MCF 10A (cell line): ENCODE measurements at regions of chr13 and their contacts with region 1.

Region 1: DNA sequence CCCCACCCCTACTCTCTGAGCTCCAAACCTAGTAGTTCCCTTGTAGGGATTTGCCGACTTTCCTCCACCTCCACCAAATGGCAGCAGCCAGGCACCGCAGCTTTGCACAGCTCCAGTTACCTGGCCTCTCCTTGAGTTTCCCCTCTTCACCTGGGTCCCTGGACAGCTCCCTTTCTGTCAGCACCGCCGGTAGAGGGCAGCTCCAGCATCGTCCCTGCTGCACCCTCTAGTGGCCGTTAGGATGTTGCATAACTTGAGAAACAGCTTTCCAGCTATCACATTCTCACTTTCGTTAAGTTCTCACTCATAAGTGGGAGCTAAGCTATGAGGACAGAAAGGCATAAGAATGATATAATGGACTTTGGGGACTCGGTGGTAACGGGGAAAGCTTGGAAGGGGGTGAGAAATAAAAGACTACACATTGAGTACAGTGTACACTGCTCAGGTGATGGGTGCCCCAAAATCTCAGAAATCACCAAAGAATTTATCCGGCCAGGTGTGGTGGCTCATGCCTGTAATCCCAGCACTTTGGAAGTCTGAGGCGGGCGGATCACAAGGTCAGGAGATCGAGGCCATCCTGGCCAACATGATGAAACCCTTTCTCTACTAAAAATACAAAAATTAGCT is 60.4 kb upstream of the OLFM4 start:
- DNase-seq: peak; percentile 83
- H3K4me3 Mint-ChIP-seq: no peak overlapping the region
- H3K27ac Mint-ChIP-seq: no peak overlapping the region
- H3K4me1 Mint-ChIP-seq: peaks cover 6% of the 10 kb centered on the region
- H3K27me3 Mint-ChIP-seq: peaks cover under 1% of the 10 kb centered on the region
- CTCF ChIP-seq: peak; percentile 95

Region 2: GRCh38 chr13:52665325-52665724 is 302.9 kb before region 1 on chr13:
- CTCF ChIA-PET with region 1: interaction called, 46 read pairs
- POLR2A ChIA-PET with region 1: no interaction called
- intact Hi-C with region 1: loop called (anchors 1 kb)
- DNase-seq: peak; percentile 30
- H3K4me3 Mint-ChIP-seq: no peak overlapping the region
- H3K27ac Mint-ChIP-seq: no peak overlapping the region
- H3K4me1 Mint-ChIP-seq: peaks cover 6% of the 10 kb centered on the region
- H3K27me3 Mint-ChIP-seq: no peaks in the 10 kb centered on the region
- CTCF ChIP-seq: peak; percentile 42

Region 3: DNA sequence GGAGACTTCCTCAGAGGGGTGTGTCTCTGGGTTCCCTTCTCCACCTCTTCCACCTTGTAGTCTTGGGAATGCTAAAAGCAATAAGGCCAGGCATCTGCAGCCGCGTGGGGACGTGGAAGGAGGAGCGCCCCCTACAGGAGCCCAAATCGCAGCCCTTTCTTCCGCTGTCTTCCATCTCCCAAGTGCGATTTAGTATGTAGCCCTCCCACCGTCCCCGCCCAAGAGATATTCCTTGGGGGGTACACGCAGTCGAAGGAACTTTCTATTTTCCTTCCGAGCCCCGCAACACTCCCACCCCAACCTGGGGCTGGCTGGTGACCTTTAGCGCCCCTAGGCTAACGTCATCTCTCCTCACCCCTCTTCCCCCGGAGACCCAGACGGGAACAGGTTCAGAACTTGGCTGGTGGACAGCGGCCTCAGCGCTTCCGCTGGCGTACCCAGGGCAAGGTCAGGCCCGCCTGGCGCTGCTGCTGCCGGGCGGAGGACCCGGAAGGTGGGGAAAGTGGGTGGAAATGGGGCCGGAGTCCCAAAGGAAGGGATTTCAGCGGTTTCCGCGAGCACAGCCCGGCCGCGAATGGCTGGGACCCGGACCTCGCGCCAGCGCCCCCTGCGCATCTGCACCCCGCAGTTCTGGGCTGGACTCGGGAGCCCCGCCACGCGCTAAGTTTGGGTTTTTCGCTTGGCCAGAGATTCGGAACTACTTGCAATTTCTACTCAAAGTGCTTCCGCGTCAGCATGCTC is 117.6 kb before region 1 on chr13:
- CTCF ChIA-PET with region 1: interaction called, 12 read pairs
- POLR2A ChIA-PET with region 1: interaction called, 3 read pairs
- intact Hi-C with region 1: no loop called
- DNase-seq: peak; percentile 62
- H3K4me3 Mint-ChIP-seq: peak overlapping the region; percentile 81
- H3K27ac Mint-ChIP-seq: peak overlapping the region; percentile 46
- H3K4me1 Mint-ChIP-seq: peaks cover 5% of the 10 kb centered on the region
- H3K27me3 Mint-ChIP-seq: peaks cover 32% of the 10 kb centered on the region
- CTCF ChIP-seq: peak; percentile 11

Region 4: DNA sequence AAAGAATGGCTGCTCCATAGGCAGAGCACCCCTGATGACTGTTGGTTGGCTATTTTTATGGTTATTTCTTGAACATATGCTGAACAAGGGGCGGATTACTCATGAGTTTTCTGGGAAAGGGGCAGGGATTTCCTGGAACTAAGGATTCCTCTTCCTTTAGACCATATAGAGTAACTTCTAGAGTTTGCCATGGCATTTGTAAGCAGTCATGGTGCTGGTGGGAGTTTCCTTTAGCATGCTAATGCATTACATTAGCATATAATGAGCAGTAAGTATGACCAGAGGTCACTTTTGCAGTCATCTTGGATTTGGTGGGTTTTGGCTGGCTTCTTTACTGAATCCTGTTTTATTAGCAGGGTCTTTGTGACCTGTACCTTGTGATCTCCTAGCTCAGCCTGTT is 81.0 kb before region 1 on chr13:
- CTCF ChIA-PET with region 1: interaction called, 20 read pairs
- POLR2A ChIA-PET with region 1: no interaction called
- intact Hi-C with region 1: no loop called
- DNase-seq: no peak
- H3K4me3 Mint-ChIP-seq: no peak overlapping the region
- H3K27ac Mint-ChIP-seq: no peak overlapping the region
- H3K4me1 Mint-ChIP-seq: no peaks in the 10 kb centered on the region
- H3K27me3 Mint-ChIP-seq: peaks cover 27% of the 10 kb centered on the region
- CTCF ChIP-seq: no peak

Region 5: DNA sequence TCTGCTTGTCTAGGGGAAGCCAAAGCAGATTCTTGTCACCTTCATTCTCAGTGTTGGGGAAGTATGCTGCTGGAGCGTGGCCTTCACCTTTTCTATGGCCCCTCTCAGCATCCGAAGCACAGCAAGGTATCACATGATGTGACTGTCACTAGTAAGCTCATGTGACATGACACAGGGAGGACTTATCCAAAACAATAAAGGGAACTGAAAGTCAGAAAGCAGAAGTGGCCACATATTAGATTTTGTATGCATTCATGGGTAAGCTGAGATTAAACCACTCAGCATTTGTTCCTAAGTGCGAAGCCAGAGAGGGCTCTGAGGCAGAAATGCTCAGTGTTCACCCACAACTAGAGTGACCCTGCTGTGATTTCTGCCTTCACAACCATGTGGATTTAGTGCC is 47.0 kb before region 1 on chr13:
- CTCF ChIA-PET with region 1: interaction called, 36 read pairs
- POLR2A ChIA-PET with region 1: interaction called, 3 read pairs
- intact Hi-C with region 1: no loop called
- DNase-seq: no peak
- H3K4me3 Mint-ChIP-seq: no peak overlapping the region
- H3K27ac Mint-ChIP-seq: no peak overlapping the region
- H3K4me1 Mint-ChIP-seq: peaks cover 19% of the 10 kb centered on the region
- H3K27me3 Mint-ChIP-seq: no peaks in the 10 kb centered on the region
- CTCF ChIP-seq: no peak

Region 6: GRCh38 chr13:52980695-52981094 is 12.5 kb after region 1 on chr13:
- CTCF ChIA-PET with region 1: interaction called, 46 read pairs
- POLR2A ChIA-PET with region 1: interaction called, 3 read pairs
- intact Hi-C with region 1: no loop called
- DNase-seq: peak; percentile 63
- H3K4me3 Mint-ChIP-seq: no peak overlapping the region
- H3K27ac Mint-ChIP-seq: peak overlapping the region; percentile 70
- H3K4me1 Mint-ChIP-seq: peaks cover 16% of the 10 kb centered on the region
- H3K27me3 Mint-ChIP-seq: no peaks in the 10 kb centered on the region
- CTCF ChIP-seq: no peak

Region 7: DNA sequence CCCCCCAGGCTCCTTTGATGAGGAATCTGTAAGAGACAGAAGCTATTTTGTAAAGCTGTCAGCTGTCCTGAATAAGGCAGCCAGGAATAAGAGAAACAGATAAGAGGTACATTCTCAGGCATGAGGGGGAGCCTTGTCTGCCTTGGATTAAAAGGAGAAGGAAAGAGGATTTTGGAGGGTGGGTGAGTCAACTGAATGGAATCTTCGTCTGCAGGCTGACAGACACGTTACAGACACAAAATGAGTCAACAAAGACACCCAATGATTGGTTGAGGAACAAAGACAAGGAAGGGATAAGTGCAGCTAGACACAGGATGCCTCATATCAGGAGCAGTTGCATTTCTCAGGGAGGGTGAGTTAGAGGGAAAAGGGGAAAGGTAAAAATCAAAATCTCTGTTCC is 222.9 kb after region 1 on chr13:
- CTCF ChIA-PET with region 1: interaction called, 29 read pairs
- POLR2A ChIA-PET with region 1: interaction called, 3 read pairs
- intact Hi-C with region 1: loop called (anchors 5 kb)
- DNase-seq: peak; percentile 83
- H3K4me3 Mint-ChIP-seq: no peak overlapping the region
- H3K27ac Mint-ChIP-seq: no peak overlapping the region
- H3K4me1 Mint-ChIP-seq: peaks cover 13% of the 10 kb centered on the region
- H3K27me3 Mint-ChIP-seq: no peaks in the 10 kb centered on the region
- CTCF ChIP-seq: no peak